ENCODE measurements at regions of chr2 and their contacts with region 1.

Region 1: DNA sequence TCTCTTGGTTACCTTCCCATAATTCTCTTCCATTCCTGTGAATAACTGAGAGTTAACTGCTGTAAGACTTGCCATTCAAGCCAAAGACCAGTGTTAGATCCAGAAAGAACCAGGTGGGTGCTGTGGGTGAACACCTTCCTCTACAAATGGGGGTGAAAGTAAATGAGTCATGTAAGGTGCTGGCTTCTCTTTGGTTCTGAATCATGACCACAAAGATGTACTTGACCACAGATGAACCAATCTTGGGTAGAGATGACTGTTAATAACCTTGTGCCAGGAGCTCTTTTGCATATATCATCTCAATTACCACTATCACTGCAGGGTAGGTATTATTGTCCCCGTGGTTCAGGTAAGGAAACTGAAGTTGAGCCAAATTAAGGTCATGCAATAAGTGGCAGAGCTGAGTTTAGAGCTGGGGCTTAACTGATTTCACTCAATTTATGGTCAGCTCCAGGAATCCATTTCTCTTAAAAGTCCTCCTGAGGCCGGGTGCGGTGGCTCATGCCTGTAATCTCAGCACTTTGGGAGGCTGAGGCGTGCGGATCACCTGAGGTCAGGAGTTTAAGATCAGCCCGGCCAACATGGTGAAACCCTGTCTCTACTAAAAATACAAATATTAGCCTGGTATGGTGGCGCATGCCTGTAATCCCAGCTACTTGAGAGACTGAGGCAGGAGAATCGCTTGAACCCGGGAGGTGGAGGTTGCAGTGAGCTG is 244.9 kb upstream of the CXCR4 start:
- DNase-seq: peak; percentile 68
- H3K4me3 Mint-ChIP-seq: no peak overlapping the region
- H3K27ac Mint-ChIP-seq: peak overlapping the region; percentile 42
- H3K4me1 Mint-ChIP-seq: peaks cover 51% of the 10 kb centered on the region
- H3K27me3 Mint-ChIP-seq: peaks cover 4% of the 10 kb centered on the region

Region 2: DNA sequence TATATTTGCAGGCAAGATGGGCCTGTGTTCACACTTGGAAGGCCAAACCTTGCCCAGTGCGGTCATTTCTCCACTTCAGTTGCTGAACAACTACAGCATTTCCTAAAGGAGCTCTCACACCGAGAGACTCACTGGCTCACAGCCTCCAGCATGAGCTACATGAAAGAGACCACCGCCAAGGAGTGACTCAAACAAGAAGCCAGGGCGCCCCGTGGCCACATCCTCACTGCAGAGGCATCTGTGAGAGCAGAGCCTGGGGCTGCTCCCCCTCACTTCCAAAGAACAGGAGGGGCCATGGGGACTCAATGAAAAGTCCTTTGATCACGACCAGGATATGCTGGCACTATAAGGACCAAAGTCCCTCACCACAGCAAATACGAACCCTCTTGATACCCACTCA is 1694.0 kb before region 1 on chr2:
- CTCF ChIA-PET with region 1: no interaction called
- intact Hi-C with region 1: loop called (anchors 5 kb)
- DNase-seq: peak; percentile 95
- H3K4me3 Mint-ChIP-seq: no peak overlapping the region
- H3K27ac Mint-ChIP-seq: no peak overlapping the region
- H3K4me1 Mint-ChIP-seq: peaks cover 63% of the 10 kb centered on the region
- H3K27me3 Mint-ChIP-seq: peaks cover 29% of the 10 kb centered on the region

Region 3: DNA sequence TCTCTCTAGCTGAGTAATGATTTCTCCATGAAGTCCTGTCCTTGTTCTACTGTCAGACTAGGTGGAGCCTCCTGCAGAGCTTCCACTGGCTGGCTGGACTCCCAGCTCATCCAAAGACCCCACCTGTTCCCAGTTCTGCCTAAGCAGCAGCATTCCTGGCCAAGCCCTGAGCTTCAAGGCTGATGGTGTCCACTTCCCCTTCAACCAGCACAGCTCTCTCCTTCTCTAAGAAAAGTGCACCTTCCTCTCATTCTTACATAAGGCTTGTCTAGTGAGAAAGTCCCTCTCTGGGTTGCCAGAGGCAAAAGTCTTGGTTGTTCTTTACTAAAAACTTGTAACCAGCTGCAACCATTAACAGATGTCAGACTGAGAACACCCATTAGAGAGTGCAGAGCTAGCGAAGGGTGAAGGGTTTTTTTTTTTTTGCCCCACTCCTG is 303.8 kb before region 1 on chr2:
- CTCF ChIA-PET with region 1: no interaction called
- intact Hi-C with region 1: loop called (anchors 1 kb)
- DNase-seq: no peak
- H3K4me3 Mint-ChIP-seq: no peak overlapping the region
- H3K27ac Mint-ChIP-seq: no peak overlapping the region
- H3K4me1 Mint-ChIP-seq: peaks cover 59% of the 10 kb centered on the region
- H3K27me3 Mint-ChIP-seq: no peaks in the 10 kb centered on the region

Region 4: DNA sequence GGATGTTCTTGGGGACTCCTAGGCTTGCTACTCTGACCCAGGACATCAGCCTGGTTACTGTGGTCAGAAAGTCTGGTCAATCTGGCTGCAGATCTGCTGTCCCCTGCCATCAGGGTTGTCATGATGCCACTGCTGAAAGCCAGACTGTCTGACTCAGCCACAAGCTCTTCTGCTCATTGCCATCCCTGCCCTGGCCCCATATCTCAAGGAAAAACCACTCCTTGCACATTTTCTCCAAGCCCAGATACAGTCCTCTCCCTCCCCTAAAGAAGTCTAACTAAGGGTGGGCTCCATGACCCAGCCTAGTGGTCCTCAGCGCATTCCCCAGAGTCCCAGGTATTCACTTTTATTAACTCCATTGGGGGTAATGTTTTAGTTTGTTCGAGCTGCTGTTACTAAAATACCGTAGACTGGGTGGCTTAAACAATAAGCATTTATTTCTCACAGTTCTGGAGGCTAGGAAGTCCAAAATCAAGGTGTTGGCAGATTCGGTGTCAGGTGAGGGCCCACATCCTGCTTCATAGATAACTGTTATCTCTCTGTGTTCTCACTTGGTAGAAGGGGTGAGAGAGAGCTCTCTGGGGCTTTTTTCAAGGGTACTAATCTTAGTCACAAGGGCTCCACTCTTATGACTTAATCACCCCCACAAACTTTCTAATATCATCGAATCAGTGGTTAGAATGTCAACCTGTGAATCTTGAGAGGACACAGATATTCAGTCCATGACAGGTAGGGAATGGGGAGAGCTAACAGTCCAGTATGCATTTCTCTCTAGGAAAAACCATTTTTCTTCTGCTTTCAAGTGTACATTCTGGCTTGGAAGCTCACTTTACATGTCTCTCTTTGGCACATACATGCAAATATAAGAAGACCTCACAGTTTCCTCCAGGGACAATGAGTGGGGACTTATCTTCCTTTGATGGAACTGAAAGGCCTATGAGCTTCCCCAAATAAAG is 150.1 kb before region 1 on chr2:
- CTCF ChIA-PET with region 1: no interaction called
- intact Hi-C with region 1: loop called (anchors 1 kb)
- DNase-seq: peak; percentile 67
- H3K4me3 Mint-ChIP-seq: no peak overlapping the region
- H3K27ac Mint-ChIP-seq: peak overlapping the region; percentile 3
- H3K4me1 Mint-ChIP-seq: peaks cover 43% of the 10 kb centered on the region
- H3K27me3 Mint-ChIP-seq: no peaks in the 10 kb centered on the region

Region 5: GRCh38 chr2:136310797-136311603 is 51.8 kb before region 1 on chr2:
- CTCF ChIA-PET with region 1: no interaction called
- intact Hi-C with region 1: loop called (anchors 1 kb)
- DNase-seq: peak; percentile 60
- H3K4me3 Mint-ChIP-seq: no peak overlapping the region
- H3K27ac Mint-ChIP-seq: peak overlapping the region; percentile 82
- H3K4me1 Mint-ChIP-seq: peaks cover 18% of the 10 kb centered on the region
- H3K27me3 Mint-ChIP-seq: no peaks in the 10 kb centered on the region

Region 6: DNA sequence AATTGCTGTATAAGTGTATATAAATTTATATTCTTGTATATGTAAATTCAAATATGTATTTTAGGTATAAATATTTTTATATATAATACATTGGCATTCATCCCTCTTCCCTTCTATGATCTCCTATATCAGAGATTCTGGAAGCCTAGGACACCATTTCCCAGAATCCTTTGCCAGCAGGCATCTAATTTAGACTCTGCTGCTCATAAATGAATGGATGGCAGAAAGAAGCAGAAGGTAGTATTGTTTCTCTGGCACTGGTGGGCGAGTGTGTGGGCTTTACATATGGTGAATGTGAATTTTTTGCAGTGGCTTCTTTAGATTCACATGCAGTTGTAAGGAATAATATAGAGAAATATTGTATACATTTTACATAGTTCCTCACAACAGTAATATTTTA is 187.3 kb after region 1 on chr2:
- CTCF ChIA-PET with region 1: no interaction called
- intact Hi-C with region 1: no loop called
- DNase-seq: no peak
- H3K4me3 Mint-ChIP-seq: no peak overlapping the region
- H3K27ac Mint-ChIP-seq: no peak overlapping the region
- H3K4me1 Mint-ChIP-seq: no peaks in the 10 kb centered on the region
- H3K27me3 Mint-ChIP-seq: peaks cover 10% of the 10 kb centered on the region

Measured in activated naive CD4-positive, alpha-beta T cell treated with anti-CD3 and anti-CD28 coated beads for 36 hours (primary cell).